Dendritic cell treated with granulocyte-macrophage colony-stimulating factor and Interleukin-4, amounts not matched to agents 40 ng/mL and 50 ng/mL, for 4 days (primary cell): ENCODE measurements at regions of chr9 and their contacts with region 1.

Region 1: GRCh38 chr9:214648-215493 is at the start of gene DOCK8:
- H3K4me3 Mint-ChIP-seq: peak within 1 kb of the TSS; percentile 92
- H3K27ac Mint-ChIP-seq: peak within 1 kb of the TSS; percentile 98
- H3K4me1 Mint-ChIP-seq: peaks cover 22% of the 10 kb centered on the region
- H3K27me3 Mint-ChIP-seq: no peaks in the 10 kb centered on the region

Region 2: DNA sequence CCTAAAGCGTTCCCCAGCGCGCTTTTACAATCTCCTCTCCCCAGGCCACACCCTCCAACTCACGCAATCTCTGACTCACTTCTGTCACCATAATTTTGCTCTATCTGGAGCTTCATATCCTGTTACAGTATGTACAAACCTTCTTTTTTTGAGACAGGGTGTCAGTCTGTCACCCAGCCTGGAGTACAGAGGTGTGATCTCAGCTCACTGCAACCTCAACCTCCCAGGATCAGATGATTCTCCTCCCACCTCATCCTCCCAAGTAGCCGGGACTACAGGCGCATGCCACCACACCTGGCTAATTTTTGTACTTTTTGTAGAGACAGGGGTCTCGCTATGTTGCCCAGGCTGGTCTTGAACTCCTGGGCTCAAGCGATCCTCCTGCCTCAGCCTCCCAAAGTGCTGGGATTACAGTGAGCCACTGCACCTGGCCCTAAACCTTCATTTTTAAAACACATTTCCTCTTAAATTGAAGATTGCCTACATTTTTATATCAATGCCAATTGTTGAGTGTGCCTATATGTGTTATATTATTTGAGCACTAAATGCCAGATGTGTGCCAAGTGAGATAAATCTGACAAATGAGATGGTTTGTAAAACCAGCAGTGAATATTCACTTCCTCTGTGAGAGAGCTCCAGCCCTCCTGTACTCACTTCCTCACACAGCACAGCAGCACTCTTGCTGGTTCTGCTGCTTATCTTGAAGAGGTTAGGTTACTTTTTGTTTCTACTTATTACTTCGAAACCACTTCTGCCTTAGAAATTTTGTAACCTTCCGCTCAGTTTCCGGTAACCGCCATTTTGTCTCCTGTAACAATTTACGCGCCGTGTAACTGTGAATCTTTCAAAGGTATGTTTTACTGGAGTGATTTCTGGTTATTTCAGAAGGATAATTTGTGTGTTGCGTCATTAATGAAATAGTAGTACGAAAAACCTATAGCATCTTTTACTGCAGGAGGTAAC is 57.7 kb after region 1 on chr9:
- intact Hi-C with region 1: loop called (anchors 2 kb)
- H3K4me3 Mint-ChIP-seq: peak overlapping the region; percentile 63
- H3K27ac Mint-ChIP-seq: peak overlapping the region; percentile 89
- H3K4me1 Mint-ChIP-seq: peaks cover 62% of the 10 kb centered on the region
- H3K27me3 Mint-ChIP-seq: no peaks in the 10 kb centered on the region

Region 3: DNA sequence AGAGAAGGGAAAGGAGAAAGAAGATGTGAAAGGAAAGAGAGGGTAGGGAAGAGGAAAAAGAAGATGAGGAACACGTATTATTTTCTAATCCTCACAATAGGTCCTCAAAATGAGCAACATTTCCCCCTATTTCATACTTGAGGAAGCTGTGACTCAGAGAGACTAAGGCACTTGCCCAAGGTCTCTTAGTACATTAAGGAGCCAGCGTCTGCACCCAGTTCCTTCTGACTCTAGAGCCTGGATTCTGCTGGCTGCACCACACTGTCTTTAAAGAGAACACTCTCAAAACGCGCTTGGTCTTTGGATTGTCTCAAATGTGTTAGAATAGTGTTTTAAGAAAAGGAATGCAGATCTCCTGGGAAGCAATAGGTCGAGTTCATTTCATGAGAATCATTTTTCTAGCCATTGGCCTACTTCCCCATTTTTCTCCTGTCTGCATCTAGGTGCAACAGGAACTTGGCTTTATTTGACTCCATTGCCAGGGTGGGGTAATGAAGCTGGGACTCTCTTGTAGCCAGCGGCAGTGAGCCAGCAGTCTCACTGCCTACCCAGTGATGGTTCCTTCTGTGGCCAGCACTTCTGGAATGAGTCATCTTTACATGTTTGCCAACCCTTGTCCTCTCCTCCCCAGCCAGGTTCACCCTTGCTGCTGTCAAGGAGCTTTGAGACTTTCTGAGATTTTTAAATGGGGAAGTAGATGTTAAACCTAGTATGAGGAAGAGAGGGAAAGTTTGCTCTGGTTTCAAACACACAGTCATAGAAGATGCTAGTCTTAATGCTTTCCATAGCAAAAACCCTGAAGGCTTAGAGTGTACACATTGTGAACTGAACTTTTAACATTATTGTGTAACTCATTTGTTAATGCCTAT is 82.5 kb after region 1 on chr9:
- intact Hi-C with region 1: loop called (anchors 2 kb)
- H3K4me3 Mint-ChIP-seq: peak overlapping the region; percentile 55
- H3K27ac Mint-ChIP-seq: peak overlapping the region; percentile 83
- H3K4me1 Mint-ChIP-seq: peaks cover 34% of the 10 kb centered on the region
- H3K27me3 Mint-ChIP-seq: no peaks in the 10 kb centered on the region